ENCODE measurements at regions of chr2 and their contacts with region 1.

Region 1: GRCh38 chr2:230824406-230824978 is 40.2 kb upstream of the ITM2C start:
- DNase-seq: peak; percentile 58
- H3K4me3 Mint-ChIP-seq: no peak overlapping the region
- H3K27ac Mint-ChIP-seq: no peak overlapping the region
- H3K4me1 Mint-ChIP-seq: peaks cover 9% of the 10 kb centered on the region
- H3K27me3 Mint-ChIP-seq: peaks cover 32% of the 10 kb centered on the region

Region 2: DNA sequence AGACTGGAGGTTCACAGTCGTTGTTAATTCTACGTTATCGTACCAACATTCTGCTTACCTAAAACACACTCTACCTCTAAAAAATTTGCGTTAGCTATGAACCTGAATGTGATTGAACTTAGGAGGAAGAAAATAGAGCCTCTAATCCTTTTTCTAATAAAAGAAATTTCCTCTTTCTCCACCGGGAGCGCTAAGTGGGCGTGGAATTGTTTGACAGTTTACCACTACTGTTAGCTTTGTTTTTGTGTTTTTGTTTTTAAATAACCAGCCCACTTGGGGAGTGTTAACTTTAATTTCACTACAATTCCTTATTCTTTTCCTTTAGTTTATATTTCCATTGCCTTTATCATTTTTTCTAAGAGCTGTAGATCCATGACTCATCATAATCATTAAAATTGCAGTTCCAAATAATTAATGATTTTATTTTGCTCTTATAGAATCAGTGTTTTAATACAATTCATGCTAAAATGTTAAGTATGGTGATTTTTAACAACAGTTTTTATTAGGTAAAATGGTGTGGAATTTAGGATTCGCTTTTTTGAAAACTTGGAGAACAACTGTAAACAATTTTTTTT is 14.7 kb before region 1 on chr2:
- CTCF ChIA-PET with region 1: interaction called, 16 read pairs
- POLR2A ChIA-PET with region 1: interaction called, 4 read pairs
- intact Hi-C with region 1: no loop called
- DNase-seq: no peak
- H3K4me3 Mint-ChIP-seq: no peak overlapping the region
- H3K27ac Mint-ChIP-seq: no peak overlapping the region
- H3K4me1 Mint-ChIP-seq: peaks cover 16% of the 10 kb centered on the region
- H3K27me3 Mint-ChIP-seq: no peaks in the 10 kb centered on the region

Region 3: DNA sequence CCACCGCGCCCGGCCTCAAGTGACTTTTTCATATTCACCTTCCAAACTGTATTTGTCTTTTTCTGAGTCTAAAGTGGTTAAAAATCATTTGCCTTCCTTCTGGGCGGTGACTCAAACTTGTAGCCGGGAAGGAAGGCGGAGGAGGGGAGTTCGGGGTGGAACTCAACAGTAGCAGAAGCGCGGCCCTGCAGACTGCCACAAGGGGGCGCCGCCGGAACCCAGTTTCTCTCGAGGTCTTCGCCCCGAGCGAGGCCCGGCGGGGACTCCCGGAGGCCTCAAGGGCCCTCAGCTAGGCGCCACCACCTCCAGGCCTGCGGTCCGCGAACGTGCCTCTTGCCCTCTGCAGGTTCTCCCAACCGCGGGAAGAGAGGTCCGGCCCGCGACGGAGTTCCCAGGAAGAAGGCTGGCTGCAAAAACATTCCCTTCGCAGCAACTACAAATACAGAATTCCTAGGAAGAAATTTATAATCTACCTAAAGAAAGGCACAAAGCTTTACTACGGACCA is 23.4 kb after region 1 on chr2:
- CTCF ChIA-PET with region 1: interaction called, 42 read pairs
- POLR2A ChIA-PET with region 1: no interaction called
- intact Hi-C with region 1: loop called (anchors 1 kb)
- DNase-seq: peak; percentile 96
- H3K4me3 Mint-ChIP-seq: peak overlapping the region; percentile 21
- H3K27ac Mint-ChIP-seq: peak overlapping the region; percentile 33
- H3K4me1 Mint-ChIP-seq: peaks cover 20% of the 10 kb centered on the region
- H3K27me3 Mint-ChIP-seq: peaks cover 31% of the 10 kb centered on the region

Region 4: DNA sequence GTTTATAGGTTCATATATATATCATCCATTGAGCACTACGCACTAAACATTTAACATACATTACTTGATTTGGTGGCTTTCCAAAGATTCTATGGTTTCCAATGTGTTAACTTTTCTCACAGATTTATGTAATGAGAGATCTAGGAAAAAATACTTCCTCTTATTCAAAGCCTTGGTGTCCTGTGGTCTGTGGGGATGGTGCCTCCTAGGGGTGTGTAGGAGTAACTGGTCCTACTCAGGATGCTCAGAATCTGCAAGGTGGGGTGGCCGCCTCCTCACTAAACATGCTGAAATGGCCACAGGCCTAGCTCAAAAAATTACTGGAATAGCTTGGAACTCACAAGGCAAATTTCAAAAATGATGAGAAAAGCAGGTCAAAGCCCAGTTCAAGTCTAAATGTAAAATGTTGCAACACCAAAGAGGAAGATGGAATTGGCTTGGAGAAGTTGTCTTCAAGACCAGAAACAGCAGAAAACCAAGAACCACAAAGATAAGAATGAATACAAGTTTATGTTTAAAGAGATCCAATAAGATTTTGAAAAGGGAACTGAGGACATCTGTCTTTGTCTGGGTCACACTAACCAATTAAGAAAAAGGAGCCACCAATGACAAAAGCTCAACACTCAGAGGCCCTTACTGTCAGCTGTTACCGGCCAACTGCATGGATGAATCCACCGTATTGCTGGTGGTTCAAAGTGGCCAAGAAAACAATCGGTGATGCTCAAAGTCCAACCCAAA is 89.1 kb after region 1 on chr2:
- CTCF ChIA-PET with region 1: interaction called, 9 read pairs
- POLR2A ChIA-PET with region 1: no interaction called
- intact Hi-C with region 1: loop called (anchors 5 kb)
- DNase-seq: peak; percentile 41
- H3K4me3 Mint-ChIP-seq: no peak overlapping the region
- H3K27ac Mint-ChIP-seq: no peak overlapping the region
- H3K4me1 Mint-ChIP-seq: peaks cover 48% of the 10 kb centered on the region
- H3K27me3 Mint-ChIP-seq: peaks cover 22% of the 10 kb centered on the region

Region 5: DNA sequence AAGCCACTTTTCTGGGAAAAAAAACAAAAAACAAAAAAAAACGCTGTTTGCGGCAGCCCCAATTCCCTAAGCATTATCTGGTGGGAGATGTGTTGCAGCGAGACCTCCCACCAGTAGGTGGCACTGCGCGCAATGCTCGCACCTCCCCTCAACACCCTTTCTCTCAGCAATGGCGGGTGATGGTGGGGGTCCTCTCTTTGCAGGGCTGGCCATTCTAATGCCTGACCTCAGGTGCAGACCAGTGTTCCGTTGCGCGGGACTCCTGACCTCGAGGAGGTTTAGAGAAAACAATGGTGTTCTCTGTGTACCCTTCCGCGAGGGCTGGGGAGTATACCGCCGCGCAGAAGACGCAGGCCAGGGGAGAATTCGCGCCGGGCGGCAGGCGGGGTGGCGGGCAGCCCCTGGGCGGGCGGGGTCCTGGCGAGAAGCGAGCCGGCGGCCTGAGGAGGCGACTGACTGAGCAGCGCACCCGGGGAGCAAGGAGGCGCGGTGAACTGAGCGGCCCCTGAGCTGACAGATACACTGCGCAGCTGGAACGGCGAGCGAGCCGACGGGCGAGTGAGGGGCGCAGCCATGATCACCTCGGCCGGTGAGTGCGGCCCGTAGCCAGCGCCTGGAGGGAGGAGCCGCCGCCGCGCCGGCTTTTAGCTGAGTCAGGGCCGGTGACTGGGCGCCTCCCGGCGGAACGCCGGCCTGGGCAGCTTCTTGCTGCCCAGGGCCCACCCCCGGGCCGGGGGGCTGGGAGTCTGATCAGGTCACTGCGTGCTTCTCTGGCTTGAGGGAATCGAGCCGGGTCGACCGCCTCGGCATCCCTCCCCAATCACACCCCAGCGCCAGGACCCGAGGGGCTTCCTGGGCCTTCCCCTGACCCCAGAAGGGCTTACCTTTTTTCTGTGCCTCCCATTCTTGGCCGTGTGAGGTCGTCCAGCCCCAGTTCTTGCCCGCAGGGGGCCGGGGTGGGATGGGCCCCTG is 232.2 kb after region 1 on chr2 and contains the start of gene PSMD1:
- CTCF ChIA-PET with region 1: interaction called, 36 read pairs
- POLR2A ChIA-PET with region 1: interaction called, 3 read pairs
- intact Hi-C with region 1: loop called (anchors 1 kb)
- DNase-seq: peak; percentile 95
- H3K4me3 Mint-ChIP-seq: peak within 1 kb of the TSS; percentile 90
- H3K27ac Mint-ChIP-seq: peak within 1 kb of the TSS; percentile 98
- H3K4me1 Mint-ChIP-seq: peaks cover 56% of the 10 kb centered on the region
- H3K27me3 Mint-ChIP-seq: peaks cover 1% of the 10 kb centered on the region
- total RNA-seq, gene PSMD1: 116 TPM